ENCODE measurements at regions of chr3 and their contacts with region 1.

Region 1: GRCh38 chr3:98039322-98040024 is 4.4 kb upstream of the GABRR3 start:
- DNase-seq: peak in 9 of 10 donors; percentile 16 to 76 (median 49)
- H3K4me3 ChIP-seq: peak overlapping the region; percentile 17 to 68 (median 52)
- H3K27ac ChIP-seq: peak overlapping the region in 27 of 59 donors; percentile 20 to 81 (median 59)
- H3K27me3 ChIP-seq: peaks cover 0 to 13% (median 0%) of the 10 kb centered on the region in 45 donors
- CTCF ChIP-seq: peak in 54 of 56 donors; percentile 84 to 100 (median 96)

Region 2: GRCh38 chr3:98588065-98588464 is 548.6 kb after region 1 on chr3:
- intact Hi-C with region 1: loop called (anchors 5 to 10 kb)
- DNase-seq: no peak
- H3K4me3 ChIP-seq: peak overlapping the region in 22 of 59 donors; percentile 0 to 93 (median 22)
- H3K27ac ChIP-seq: peak overlapping the region in 55 of 59 donors; percentile 1 to 98 (median 64)
- H3K27me3 ChIP-seq: no peaks in the 10 kb centered on the region
- CTCF ChIP-seq: peak in 52 of 56 donors; percentile 8 to 60 (median 36)

Measured in dorsolateral prefrontal cortex (tissue), 120 donors.